BJ (cell line): ENCODE measurements at regions of chr12 and their contacts with region 1.

Region 1: DNA sequence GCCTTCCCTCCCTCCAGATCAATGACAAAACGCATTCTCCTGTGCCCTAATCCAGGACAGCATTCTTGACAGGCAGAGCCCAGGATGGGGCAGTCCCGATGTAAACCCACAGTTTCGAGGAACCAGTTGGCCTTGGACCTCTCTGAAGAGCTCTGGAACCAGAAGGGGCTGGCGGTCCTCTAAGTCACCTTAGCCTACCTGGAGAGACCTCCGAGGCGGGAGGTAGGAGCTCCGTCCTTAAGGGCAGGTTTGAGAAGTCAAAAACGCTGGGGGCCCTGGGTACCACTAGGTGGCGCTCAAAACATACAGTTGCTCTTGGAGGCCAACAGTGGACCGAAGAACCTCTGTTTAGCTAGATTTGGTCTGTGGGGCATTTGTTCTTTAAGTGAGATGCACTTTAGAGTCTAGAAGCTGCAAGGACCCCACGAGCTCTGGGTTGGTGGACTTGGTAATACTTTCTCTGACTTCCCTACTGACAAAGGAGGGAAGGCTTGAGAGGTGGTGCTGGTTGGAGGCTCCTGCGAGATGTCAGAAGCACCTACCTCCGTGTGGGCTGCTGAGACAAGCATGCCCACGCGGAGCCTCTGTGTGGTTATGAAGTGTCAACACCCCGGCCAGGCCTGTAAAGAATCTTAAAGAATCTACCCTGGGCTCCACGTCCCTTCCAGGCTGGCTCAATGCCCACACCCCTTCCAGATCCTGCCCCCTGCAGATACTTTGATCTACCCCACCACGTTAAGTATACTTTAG is 74.8 kb upstream of the CHST11 start:
- DNase-seq: no peak
- H3K4me3 ChIP-seq: no peak overlapping the region
- H3K27me3 ChIP-seq: no peaks in the 10 kb centered on the region
- CTCF ChIP-seq: peak; percentile 98

Region 2: GRCh38 chr12:103288016-103288415 is 1093.9 kb before region 1 on chr12:
- CTCF ChIA-PET with region 1: no interaction called
- POLR2A ChIA-PET with region 1: no interaction called
- DNase-seq: no peak
- H3K4me3 ChIP-seq: no peak overlapping the region
- H3K27me3 ChIP-seq: no peaks in the 10 kb centered on the region
- CTCF ChIP-seq: no peak

Region 3: GRCh38 chr12:104371043-104371870 is 10.6 kb before region 1 on chr12:
- CTCF ChIA-PET with region 1: interaction called, 15 read pairs
- POLR2A ChIA-PET with region 1: no interaction called
- DNase-seq: no peak
- H3K4me3 ChIP-seq: no peak overlapping the region
- H3K27me3 ChIP-seq: no peaks in the 10 kb centered on the region
- CTCF ChIP-seq: no peak

Region 4: DNA sequence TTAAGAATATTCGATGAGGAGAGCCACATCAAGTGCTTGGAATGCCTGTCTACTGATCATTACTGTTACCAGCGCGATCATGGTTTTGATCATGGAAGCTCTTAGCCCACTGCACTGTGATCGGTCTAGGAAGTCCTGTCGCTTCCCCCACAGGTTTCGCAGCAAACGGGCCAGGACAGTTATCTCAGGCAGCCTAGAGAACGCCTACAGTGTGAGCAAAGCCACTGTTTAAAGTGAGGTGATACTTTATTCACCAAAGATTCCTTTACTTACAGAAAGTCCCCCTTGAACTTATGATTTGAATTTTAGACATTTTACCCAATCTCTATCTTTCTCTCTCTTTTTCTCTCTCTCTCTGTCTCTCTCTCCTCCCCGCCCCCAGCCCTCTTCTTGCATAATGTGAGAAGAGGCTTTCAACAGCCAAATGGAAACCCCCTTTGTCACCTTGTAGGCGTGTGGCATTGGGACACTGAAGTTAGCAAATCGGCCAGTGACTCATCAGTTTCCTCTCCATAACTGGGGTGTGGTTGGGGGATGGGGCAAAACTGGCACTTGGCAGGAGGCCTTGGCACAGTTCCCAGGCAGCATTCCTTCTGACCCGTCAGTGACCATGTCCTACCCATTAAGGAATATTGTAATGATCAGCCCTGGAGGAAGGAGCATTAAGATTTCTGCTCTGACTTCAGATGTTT is 289.6 kb after region 1 on chr12:
- CTCF ChIA-PET with region 1: interaction called, 10 read pairs
- POLR2A ChIA-PET with region 1: no interaction called
- DNase-seq: peak; percentile 69
- H3K4me3 ChIP-seq: no peak overlapping the region
- H3K27me3 ChIP-seq: no peaks in the 10 kb centered on the region; the same call in none of the 2 replicates
- CTCF ChIP-seq: no peak

Region 5: GRCh38 chr12:104877123-104877705 is 495.3 kb after region 1 on chr12:
- CTCF ChIA-PET with region 1: interaction called, 42 read pairs
- POLR2A ChIA-PET with region 1: no interaction called
- DNase-seq: no peak
- H3K4me3 ChIP-seq: no peak overlapping the region
- H3K27me3 ChIP-seq: no peaks in the 10 kb centered on the region
- CTCF ChIP-seq: peak; percentile 75

Region 6: DNA sequence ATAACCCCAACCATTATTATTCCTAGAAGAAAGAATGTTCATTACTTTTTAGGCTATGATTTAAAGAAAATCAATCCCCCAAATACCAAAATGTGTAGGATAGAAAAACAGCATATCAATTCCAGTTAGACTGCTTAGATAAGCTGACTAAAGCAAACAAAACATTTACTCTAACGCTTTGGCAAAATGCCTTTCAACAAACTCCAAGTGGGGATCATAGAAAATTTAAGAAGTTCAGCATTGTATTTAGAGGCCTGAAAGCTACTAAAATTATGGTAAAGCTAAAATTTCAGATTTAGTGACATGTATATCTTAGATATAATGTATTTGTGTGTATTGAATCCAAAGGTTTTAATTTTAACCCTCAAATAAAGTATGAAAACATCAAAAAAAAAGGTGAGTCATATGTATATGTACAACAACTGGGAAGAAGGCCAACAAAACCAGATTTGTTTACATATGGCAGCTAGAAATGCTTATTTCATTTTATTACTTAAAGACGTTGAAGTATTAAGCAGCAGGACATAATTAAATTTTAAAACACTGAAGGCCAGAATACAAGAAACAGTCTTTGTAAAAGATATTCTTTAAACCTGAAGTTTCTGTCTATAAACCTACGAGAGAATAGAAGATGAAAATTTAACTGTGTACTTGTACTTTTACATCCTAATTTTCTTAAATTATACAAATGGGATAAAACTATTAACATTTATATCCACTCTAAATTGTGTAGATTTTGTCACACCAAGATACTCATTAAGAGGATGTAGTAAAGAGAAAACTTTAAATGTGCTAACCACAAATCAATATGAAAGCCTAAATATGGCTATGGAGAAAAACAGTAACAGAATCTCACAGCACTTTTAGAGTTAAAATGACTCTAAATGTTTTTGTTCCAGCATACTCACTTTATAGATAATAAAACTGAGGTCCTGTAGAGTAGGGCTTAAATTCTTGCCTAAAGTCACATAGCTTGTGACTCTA is 504.8 kb after region 1 on chr12:
- CTCF ChIA-PET with region 1: interaction called, 11 read pairs
- POLR2A ChIA-PET with region 1: no interaction called
- DNase-seq: no peak
- H3K4me3 ChIP-seq: no peak overlapping the region
- H3K27me3 ChIP-seq: no peaks in the 10 kb centered on the region
- CTCF ChIP-seq: no peak

Region 7: GRCh38 chr12:105214623-105215382 is 832.9 kb after region 1 on chr12:
- CTCF ChIA-PET with region 1: no interaction called
- POLR2A ChIA-PET with region 1: no interaction called
- DNase-seq: no peak
- H3K4me3 ChIP-seq: no peak overlapping the region
- H3K27me3 ChIP-seq: no peaks in the 10 kb centered on the region
- CTCF ChIP-seq: no peak